ENCODE measurements at regions of chr11 and their contacts with region 1.

Region 1: DNA sequence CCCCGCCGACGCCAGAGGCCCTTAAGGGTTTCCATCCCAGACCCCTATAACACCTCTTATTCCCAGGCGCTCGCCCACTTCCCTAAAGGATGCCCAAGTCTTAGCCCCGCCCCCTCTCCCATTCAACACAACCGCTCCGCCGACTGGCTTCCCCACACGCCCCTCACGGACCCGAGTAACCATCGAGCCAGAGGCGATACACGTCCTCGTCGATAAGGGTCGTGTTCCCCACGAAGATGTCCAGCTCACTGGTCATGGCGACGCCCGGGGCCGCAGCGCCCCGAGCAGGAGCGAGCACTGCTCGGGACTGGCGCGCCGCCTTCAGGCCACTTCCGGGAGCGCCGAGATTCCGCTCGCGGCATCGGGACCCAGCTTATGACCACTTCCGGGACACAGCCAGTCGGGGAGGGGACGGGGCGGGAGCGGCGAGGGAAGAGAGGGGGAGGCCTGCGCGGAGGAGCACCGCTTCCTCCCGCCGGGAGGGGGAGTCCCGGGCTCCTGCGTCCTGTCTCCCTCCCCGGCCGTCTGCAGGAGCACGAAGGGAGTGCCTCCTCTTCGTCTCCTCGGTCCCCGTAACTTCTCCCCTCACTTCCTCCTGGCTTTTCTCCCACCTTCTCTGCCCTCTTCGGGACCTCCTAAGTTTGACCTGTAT is at the start of gene FIBP:
- DNase-seq: peak; percentile 87 to 98
- H3K4me3 ChIP-seq: peak within 1 kb of the TSS; percentile 73 to 84 (median 79)
- H3K27ac ChIP-seq: peak within 1 kb of the TSS; percentile 75
- H3K4me1 ChIP-seq: peaks cover 0 to 27% (median 12%) of the 10 kb centered on the region in 4 experiments; a peak in 5 of 7 replicates
- H3K27me3 ChIP-seq: peaks cover 0 to 14% (median 8%) of the 10 kb centered on the region in 4 experiments; a peak in 6 of 7 replicates
- CTCF ChIP-seq: peak in 2 of 3 experiments; percentile 80 to 84; a peak in 3 of 4 replicates
- EP300 ChIP-seq: no peak; a peak in 1 of 3 replicates
- POLR2A ChIP-seq: peak in 1 of 2 experiments; percentile 93; a peak in 2 of 3 replicates
- RAD21 ChIP-seq: peak; percentile 42 to 64
- total RNA-seq, gene FIBP: 74.3 and 79.9 TPM in 2 replicates

Region 2: DNA sequence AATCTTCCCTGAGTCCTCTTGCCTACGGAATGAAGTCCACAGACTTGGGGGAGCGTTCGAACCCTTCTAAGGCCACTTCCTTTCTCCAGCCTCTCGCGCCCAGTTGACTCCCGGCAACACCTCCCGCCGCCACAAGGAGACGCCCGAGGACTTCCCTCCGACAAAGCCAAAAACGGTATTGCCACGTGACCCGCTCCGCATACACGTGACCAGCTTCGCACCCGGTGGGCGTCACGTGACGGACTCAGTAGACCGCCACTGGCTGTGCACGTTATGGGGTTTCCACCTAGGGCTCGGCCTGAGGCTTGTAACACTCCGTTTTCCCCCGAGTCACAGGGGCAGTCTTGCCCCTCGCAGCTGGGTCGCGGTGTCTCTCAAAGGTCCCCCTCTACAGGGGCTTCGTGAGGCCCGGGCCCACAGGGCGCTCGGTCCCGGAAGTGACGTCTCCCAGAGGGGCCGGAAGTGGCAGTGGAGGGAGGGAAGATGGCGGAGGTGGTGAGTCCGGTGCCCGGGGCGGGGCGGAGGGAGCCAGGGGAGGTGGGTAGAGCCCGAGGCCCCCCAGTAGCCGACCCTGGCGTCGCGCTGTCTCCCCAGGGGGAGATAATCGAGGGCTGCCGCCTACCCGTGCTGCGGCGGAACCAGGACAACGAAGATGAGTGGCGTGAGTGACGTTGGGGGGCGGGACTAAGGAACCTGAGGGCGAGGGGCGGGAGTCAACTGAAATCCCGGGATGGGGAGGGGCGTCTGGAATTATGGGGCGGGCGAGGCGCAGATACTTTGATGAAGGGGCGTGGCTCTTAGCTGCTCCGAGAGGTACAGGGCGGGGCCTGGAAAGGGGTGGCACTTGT is 176.3 kb before region 1 on chr11 and contains the start of gene KAT5:
- CTCF ChIA-PET with region 1: interaction called, 18 read pairs
- POLR2A ChIA-PET with region 1: interaction called, 6 read pairs
- DNase-seq: peak; percentile 91 to 100
- H3K4me3 ChIP-seq: peak within 1 kb of the TSS; percentile 62 to 87 (median 74)
- H3K27ac ChIP-seq: peak within 1 kb of the TSS; percentile 99
- H3K4me1 ChIP-seq: peaks cover 0 to 2% (median 2%) of the 10 kb centered on the region in 4 experiments; a peak in 1 of 7 replicates
- H3K27me3 ChIP-seq: no peaks in the 10 kb centered on the region
- CTCF ChIP-seq: peak; percentile 95 to 96 (median 95)
- EP300 ChIP-seq: 0 out of 3 replicates have a peak, but pooled peaks of 1 of the 2 experiments have one; percentile 60
- POLR2A ChIP-seq: peak; percentile 86 to 88
- RAD21 ChIP-seq: peak; percentile 94 to 96
- total RNA-seq, gene KAT5: 36.4 and 37.4 TPM in 2 replicates

Region 3: DNA sequence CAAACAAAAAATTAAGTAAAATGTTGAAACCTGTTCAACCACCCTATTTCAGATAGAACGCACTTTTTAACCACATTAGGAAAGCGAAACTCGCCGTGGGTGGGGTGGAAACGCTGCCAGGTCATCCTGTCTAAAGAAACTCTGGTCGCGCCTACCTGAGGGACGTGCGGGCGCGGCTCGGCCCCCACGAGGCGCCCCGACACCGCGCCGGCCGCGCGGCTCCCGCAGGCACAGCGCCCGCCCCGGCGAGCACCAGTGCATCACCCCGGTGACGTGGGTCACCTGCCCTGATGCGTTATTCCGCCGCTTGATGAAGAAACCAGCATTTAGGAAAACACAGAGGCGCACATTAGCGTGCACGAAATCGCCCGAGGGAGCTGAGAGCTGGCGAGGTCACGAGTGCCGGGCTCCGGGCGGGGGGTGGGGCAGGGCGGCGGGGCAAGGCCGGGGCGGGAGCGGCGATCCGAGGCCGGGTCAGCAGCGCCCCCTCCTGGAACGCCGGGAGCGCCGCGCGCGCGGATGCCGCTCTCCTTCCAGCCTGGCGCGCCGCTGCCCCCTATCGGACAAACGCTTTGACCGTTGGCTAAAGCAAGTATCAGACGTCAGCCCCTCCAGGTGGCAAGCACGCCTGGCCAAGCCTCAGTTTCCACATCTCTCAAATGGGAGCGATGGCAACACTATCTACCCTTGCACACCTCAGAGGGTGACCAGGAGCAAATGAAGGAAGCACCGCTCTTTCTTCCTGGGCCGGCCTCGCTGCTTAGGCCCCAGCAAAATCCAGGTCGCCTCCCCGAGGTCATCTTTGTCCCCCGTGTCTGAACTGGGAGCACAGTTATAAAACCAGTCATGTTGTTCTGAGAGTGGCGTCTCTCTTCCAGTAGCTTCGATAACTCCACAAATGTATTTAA is 70.2 kb before region 1 on chr11:
- CTCF ChIA-PET with region 1: interaction called, 24 read pairs
- POLR2A ChIA-PET with region 1: no interaction called
- DNase-seq: peak; percentile 53 to 99
- H3K4me3 ChIP-seq: peak overlapping the region; percentile 41 to 74 (median 67)
- H3K27ac ChIP-seq: no peak overlapping the region
- H3K4me1 ChIP-seq: no peaks in the 10 kb centered on the region
- H3K27me3 ChIP-seq: peaks cover 0 to 11% (median 4%) of the 10 kb centered on the region in 4 experiments; a peak in 4 of 7 replicates
- CTCF ChIP-seq: peak; percentile 99 to 100 (median 99)
- EP300 ChIP-seq: peak in 1 of 2 experiments; percentile 28; a peak in 1 of 3 replicates
- POLR2A ChIP-seq: no peak
- RAD21 ChIP-seq: peak; percentile 91 to 95

Region 4: DNA sequence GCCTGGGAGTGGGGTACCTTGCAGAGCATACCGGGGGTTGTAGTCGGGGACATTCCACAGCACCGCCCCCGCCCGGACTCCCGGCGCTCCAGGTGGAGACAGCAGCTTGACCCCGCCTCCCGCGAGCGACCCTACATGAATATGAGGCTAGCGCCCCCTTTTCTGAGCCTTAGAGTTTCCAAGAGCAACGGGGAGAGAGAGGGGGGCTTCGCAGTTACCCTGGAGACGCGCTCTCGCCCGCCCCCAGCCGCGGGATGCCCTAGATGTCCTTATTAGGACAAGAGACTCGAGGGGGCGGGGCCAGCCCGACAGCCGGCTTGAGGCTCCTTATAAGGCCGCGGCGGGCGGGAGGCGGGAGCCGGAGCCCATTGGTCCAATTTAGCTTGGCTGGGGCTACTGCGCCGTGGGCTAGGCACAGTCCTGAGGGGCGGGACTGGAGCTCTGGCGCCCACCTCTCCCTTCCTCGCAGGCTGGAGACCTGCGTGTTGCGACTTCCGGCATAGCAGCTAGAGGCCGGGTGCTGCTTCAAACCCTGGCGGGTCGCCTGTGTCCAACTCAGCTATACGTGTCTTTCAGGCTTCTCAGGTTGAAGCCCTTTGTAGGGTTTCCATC is 29.0 kb before region 1 on chr11:
- CTCF ChIA-PET with region 1: interaction called, 283 read pairs
- POLR2A ChIA-PET with region 1: interaction called, 1,071 read pairs
- DNase-seq: peak; percentile 99
- H3K4me3 ChIP-seq: peak overlapping the region; percentile 75 to 95 (median 86)
- H3K27ac ChIP-seq: peak overlapping the region; percentile 96
- H3K4me1 ChIP-seq: peaks cover 0 to 15% (median 6%) of the 10 kb centered on the region in 4 experiments; a peak in 5 of 7 replicates
- H3K27me3 ChIP-seq: no peaks in the 10 kb centered on the region
- CTCF ChIP-seq: peak in 2 of 3 experiments; percentile 28 to 48; a peak in 3 of 4 replicates
- EP300 ChIP-seq: peak in 1 of 2 experiments; percentile 12; a peak in 1 of 3 replicates
- POLR2A ChIP-seq: peak in 1 of 2 experiments; percentile 96; a peak in 2 of 3 replicates
- RAD21 ChIP-seq: peak in 1 of 2 experiments; percentile 6; a peak in 1 of 4 replicates

Region 5: GRCh38 chr11:65911682-65912568 is 23.6 kb after region 1 on chr11:
- CTCF ChIA-PET with region 1: interaction called, 212 read pairs
- POLR2A ChIA-PET with region 1: interaction called, 36 read pairs
- DNase-seq: peak in 1 of 2 experiments; percentile 73
- H3K4me3 ChIP-seq: no peak overlapping the region
- H3K27ac ChIP-seq: no peak overlapping the region
- H3K4me1 ChIP-seq: peaks cover 2 to 7% (median 5%) of the 10 kb centered on the region in 4 experiments; a peak in 5 of 7 replicates
- H3K27me3 ChIP-seq: peaks cover 0 to 11% (median 2%) of the 10 kb centered on the region in 4 experiments; a peak in 4 of 7 replicates
- CTCF ChIP-seq: peak; percentile 31 to 61 (median 60)
- EP300 ChIP-seq: no peak
- POLR2A ChIP-seq: no peak; a peak in 1 of 3 replicates
- RAD21 ChIP-seq: peak; percentile 42 to 64

Region 6: DNA sequence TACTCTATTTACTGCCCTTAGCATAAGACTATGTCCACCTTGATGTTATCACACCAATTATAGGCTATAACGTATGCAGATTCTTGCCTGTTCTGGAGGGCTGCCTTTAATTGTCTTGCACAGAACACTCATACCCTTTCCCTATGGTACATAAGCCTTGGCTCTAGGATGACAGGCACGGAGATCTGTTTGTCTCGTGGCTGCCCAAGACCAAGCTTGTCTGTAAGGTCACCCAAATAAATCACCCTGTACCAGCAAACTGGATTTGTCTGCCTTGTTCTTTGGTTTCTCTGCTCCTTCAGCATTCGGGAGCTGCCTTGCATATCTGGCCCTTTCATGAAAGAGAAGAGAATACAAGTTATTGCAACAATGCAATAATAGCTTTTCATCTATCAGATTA is 49.5 kb after region 1 on chr11:
- CTCF ChIA-PET with region 1: interaction called, 17 read pairs
- POLR2A ChIA-PET with region 1: interaction called, 4 read pairs
- DNase-seq: no peak
- H3K4me3 ChIP-seq: no peak overlapping the region
- H3K27ac ChIP-seq: no peak overlapping the region
- H3K4me1 ChIP-seq: peaks cover 0 to 4% (median 0%) of the 10 kb centered on the region in 4 experiments; a peak in 2 of 7 replicates
- H3K27me3 ChIP-seq: no peaks in the 10 kb centered on the region
- CTCF ChIP-seq: no peak
- EP300 ChIP-seq: no peak
- POLR2A ChIP-seq: no peak
- RAD21 ChIP-seq: no peak

Region 7: GRCh38 chr11:65988791-65989592 is 100.7 kb after region 1 on chr11:
- CTCF ChIA-PET with region 1: interaction called, 281 read pairs
- POLR2A ChIA-PET with region 1: interaction called, 3 read pairs
- DNase-seq: peak; percentile 78 to 90
- H3K4me3 ChIP-seq: no peak overlapping the region
- H3K27ac ChIP-seq: no peak overlapping the region
- H3K4me1 ChIP-seq: no peaks in the 10 kb centered on the region
- H3K27me3 ChIP-seq: no peaks in the 10 kb centered on the region; a peak in 1 of 7 replicates
- CTCF ChIP-seq: peak; percentile 79 to 99 (median 99)
- EP300 ChIP-seq: no peak
- POLR2A ChIP-seq: no peak
- RAD21 ChIP-seq: peak; percentile 96